ENCODE measurements at regions of chr4 and their contacts with region 1.

Region 1: GRCh38 chr4:46648088-46648744 is 258.3 kb upstream of the GABRA2 start:
- DNase-seq: peak; percentile 20
- ATAC-seq: no peak
- H3K4me3 Mint-ChIP-seq: no peak overlapping the region
- H3K27ac Mint-ChIP-seq: no peak overlapping the region
- H3K4me1 Mint-ChIP-seq: no peaks in the 10 kb centered on the region
- H3K27me3 Mint-ChIP-seq: no peaks in the 10 kb centered on the region

Region 2: DNA sequence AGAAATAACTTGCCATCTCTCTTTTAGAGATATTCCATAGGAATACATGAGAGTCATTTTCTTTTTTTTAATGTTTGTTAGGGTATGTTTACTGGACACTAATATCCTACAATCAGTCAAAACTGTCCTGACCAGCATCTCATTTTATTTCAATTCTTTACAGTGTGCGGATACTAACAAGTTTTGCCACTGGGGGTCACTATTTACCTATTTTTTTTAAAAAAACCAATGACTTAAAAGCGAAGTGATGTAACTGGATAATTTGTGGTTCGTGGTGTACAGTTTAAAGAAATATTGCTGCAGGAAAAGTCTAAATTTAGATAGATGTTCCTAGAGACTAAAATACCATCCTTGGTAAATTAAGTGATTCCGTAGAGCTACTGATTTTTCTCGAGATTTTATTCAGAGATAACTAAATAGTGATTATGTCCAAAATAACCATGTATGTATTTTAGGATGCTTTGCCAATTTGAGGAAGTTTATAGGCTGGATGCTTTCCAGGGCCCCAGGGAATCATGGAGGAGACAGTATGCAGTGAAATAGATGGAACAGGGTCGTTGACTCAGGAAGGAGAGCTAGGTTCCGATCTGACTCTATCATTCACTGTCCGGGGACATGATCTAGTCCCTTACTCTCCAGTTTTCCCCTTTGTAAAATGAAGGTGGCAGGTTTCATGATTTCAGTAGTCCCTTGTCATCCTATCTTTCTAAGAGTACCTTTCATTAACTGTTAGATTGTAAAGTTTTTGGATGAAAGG is 1887.9 kb before region 1 on chr4:
- CTCF ChIA-PET with region 1: no interaction called
- POLR2A ChIA-PET with region 1: no interaction called
- intact Hi-C with region 1: loop called in 1 of 2 experiments (anchors 5 kb)
- DNase-seq: peak; percentile 10
- ATAC-seq: peak; percentile 53
- H3K4me3 Mint-ChIP-seq: no peak overlapping the region
- H3K27ac Mint-ChIP-seq: no peak overlapping the region
- H3K4me1 Mint-ChIP-seq: no peaks in the 10 kb centered on the region
- H3K27me3 Mint-ChIP-seq: peaks cover 17% of the 10 kb centered on the region

Region 3: GRCh38 chr4:46442963-46443362 is 205.3 kb before region 1 on chr4:
- CTCF ChIA-PET with region 1: no interaction called
- POLR2A ChIA-PET with region 1: no interaction called
- intact Hi-C with region 1: no loop called
- DNase-seq: no peak
- ATAC-seq: no peak
- H3K4me3 Mint-ChIP-seq: no peak overlapping the region
- H3K27ac Mint-ChIP-seq: no peak overlapping the region
- H3K4me1 Mint-ChIP-seq: no peaks in the 10 kb centered on the region
- H3K27me3 Mint-ChIP-seq: no peaks in the 10 kb centered on the region

Measured in activated CD4-positive, alpha-beta T cell treated with anti-CD3 and anti-CD28 coated beads for 36 hours (primary cell).